ENCODE measurements at regions of chr6 and their contacts with region 1.

Region 1: DNA sequence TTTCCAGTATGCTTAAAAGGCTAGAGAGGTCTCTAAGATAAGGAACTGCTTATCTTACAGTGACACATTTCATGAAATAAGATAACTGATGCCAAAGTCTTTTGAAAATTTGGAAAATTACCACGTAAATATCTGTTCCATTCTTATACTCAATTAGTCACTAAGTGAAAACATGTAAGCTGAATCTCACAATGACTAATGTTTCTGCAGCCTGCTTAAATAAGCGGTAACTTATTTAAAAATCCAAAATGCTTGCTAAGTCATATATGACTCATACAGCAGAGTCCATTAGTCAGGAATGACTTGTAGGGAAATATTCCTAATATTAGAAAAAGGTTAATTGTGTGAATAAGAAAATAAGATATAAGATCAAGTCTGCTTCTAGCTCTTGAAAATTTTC is 27.8 kb upstream of the LGSN start:
- DNase-seq: peak in 2 of 3 donors; percentile 8 to 65
- H3K4me3 ChIP-seq: no peak overlapping the region
- H3K4me3 Mint-ChIP-seq: no peak overlapping the region
- H3K27ac ChIP-seq: no peak overlapping the region
- H3K27ac Mint-ChIP-seq: peak overlapping the region in 1 of 7 donors; percentile 55
- H3K4me1 ChIP-seq: peaks cover 14 to 19% of the 10 kb centered on the region in 2 donors
- H3K4me1 Mint-ChIP-seq: peaks cover 22% of the 10 kb centered on the region
- H3K27me3 ChIP-seq: no peaks in the 10 kb centered on the region
- H3K27me3 Mint-ChIP-seq: peaks cover 0 to 3% (median 0%) of the 10 kb centered on the region in 3 donors
- CTCF ChIP-seq: no peak

Region 2: GRCh38 chr6:63802606-63803206 is 455.1 kb after region 1 on chr6:
- intact Hi-C with region 1: loop called in 1 of 2 experiments (anchors 10 kb)
- DNase-seq: peak; percentile 16 to 41 (median 23)
- H3K4me3 ChIP-seq: no peak overlapping the region
- H3K4me3 Mint-ChIP-seq: no peak overlapping the region
- H3K27ac ChIP-seq: no peak overlapping the region
- H3K27ac Mint-ChIP-seq: peak overlapping the region in 1 of 7 donors; percentile 32
- H3K4me1 ChIP-seq: peaks cover 35 to 41% of the 10 kb centered on the region in 2 donors
- H3K4me1 Mint-ChIP-seq: peaks cover 52% of the 10 kb centered on the region
- H3K27me3 ChIP-seq: no peaks in the 10 kb centered on the region
- H3K27me3 Mint-ChIP-seq: no peaks in the 10 kb centered on the region
- CTCF ChIP-seq: peak; percentile 81

Region 3: DNA sequence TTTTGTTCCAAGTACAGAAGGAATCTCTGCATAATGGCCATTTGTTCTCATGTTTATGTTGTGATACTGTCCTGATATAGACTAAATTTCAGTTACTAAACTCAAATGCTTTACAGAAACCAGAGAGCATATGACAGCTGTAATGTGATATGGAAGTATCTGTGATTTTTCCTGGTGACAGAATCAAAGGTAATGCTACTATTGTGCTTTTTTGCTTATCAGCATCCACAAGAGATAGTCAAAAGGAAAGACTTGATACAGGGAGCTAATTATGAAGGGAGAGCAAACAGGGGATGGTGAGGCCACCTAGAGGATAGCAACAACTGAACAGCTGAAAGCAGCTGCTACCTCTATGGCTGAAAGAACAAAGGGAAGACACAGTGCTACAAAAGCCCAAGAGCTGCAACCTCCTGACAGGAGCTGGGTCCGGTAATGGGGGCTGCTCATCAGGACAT is 469.4 kb after region 1 on chr6:
- intact Hi-C with region 1: loop called in 1 of 2 experiments (anchors 10 kb)
- DNase-seq: no peak
- H3K4me3 ChIP-seq: peak overlapping the region in 1 of 3 experiments; percentile 39
- H3K4me3 Mint-ChIP-seq: peak overlapping the region; percentile 45 to 76
- H3K27ac ChIP-seq: peak overlapping the region; percentile 23 to 27
- H3K27ac Mint-ChIP-seq: peak overlapping the region in 6 of 7 donors; percentile 14 to 80 (median 60)
- H3K4me1 ChIP-seq: peaks cover 25 to 30% of the 10 kb centered on the region in 2 donors
- H3K4me1 Mint-ChIP-seq: peaks cover 40% of the 10 kb centered on the region
- H3K27me3 ChIP-seq: no peaks in the 10 kb centered on the region
- H3K27me3 Mint-ChIP-seq: no peaks in the 10 kb centered on the region
- CTCF ChIP-seq: peak; percentile 20

Measured in CD14-positive monocyte (primary cell).